CD14-positive monocyte (primary cell): ENCODE measurements at regions of chr9 and their contacts with region 1.

Region 1: GRCh38 chr9:89400403-89401116 is 82.3 kb downstream of the SECISBP2 start:
- DNase-seq: peak; percentile 77 to 89 (median 86)
- H3K4me3 ChIP-seq: peak overlapping the region in 1 of 3 experiments; percentile 42
- H3K4me3 Mint-ChIP-seq: peak overlapping the region; percentile 32 to 82
- H3K27ac ChIP-seq: peak overlapping the region; percentile 72 to 85
- H3K27ac Mint-ChIP-seq: peak overlapping the region; percentile 92 to 99 (median 96)
- H3K4me1 ChIP-seq: peaks cover 59% of the 10 kb centered on the region in 2 donors
- H3K4me1 Mint-ChIP-seq: peaks cover 75% of the 10 kb centered on the region
- H3K27me3 ChIP-seq: no peaks in the 10 kb centered on the region
- H3K27me3 Mint-ChIP-seq: peaks cover 0 to 6% (median 0%) of the 10 kb centered on the region in 3 donors
- CTCF ChIP-seq: no peak

Region 2: DNA sequence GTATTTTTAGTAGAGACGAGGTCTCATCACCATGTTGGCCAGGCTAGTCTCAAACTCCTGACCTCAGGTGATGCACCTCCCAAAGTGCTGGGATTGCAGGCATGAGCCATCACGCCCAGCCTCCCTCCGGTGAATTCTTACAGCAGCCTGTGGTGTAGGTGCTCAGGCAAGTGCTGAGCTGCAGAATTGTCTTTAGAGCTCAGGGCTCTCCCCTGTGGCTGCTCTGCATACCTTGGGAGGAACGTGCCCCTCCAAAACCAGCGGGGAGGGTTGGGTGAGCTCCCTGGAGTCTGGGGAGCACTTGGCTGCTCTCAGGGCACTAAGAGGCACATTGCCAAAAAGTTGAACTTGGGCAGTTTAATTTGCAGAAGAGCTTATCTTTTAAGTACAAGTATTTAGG is 52.9 kb before region 1 on chr9:
- intact Hi-C with region 1: loop called in 1 of 2 experiments (anchors 2 kb)
- DNase-seq: no peak
- H3K4me3 ChIP-seq: no peak overlapping the region
- H3K4me3 Mint-ChIP-seq: no peak overlapping the region
- H3K27ac ChIP-seq: no peak overlapping the region
- H3K27ac Mint-ChIP-seq: peak overlapping the region in 2 of 7 donors; percentile 25 to 51
- H3K4me1 ChIP-seq: peaks cover 19 to 21% of the 10 kb centered on the region in 2 donors
- H3K4me1 Mint-ChIP-seq: peaks cover 23% of the 10 kb centered on the region
- H3K27me3 ChIP-seq: no peaks in the 10 kb centered on the region
- H3K27me3 Mint-ChIP-seq: no peaks in the 10 kb centered on the region
- CTCF ChIP-seq: no peak

Region 3: DNA sequence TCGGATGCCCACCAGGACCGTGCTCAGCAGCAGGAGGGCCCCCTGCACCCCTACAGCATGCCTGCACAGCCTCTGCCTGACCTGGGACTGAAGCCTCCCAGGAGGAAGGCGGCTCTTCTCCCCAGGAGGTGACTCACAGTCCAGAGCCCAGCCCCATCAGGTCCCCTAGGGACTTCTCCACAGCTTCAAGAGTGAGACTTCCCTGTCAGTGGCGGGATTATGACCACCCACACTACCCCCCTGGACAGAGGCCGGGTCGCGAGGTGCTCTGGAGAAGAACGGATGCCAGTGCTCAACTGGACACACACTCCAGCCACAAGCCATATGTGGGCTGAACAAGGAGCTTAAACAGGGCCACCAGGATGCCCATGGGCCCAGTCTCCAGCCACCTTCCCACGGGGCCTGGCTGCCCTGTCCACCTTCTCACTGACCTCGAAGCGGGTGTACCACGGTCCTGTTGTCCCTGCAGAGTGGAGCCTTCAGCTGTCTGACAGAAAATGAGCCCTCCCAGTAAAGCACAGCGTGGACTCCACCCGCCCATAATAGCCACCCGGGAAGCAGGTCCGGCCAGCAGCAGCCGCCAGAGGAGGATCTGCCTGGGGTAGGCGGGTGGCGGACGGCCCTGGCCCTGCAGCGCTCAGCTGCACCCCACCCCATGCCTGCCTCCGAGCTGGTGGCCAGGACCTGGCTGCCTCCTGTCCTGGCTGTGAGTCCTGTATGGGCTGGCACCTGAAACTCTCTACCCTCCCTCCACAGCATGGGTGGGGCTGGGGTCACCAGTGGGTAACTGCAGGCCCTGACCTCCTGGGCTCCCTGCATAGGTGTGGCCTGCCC is 42.6 kb after region 1 on chr9:
- intact Hi-C with region 1: loop called in 1 of 2 experiments (anchors 5 kb)
- DNase-seq: peak; percentile 82 to 90 (median 85)
- H3K4me3 ChIP-seq: no peak overlapping the region
- H3K4me3 Mint-ChIP-seq: peak overlapping the region; percentile 39 to 41
- H3K27ac ChIP-seq: peak overlapping the region; percentile 89 to 95
- H3K27ac Mint-ChIP-seq: peak overlapping the region; percentile 85 to 97 (median 96)
- H3K4me1 ChIP-seq: peaks cover 50 to 54% of the 10 kb centered on the region in 2 donors
- H3K4me1 Mint-ChIP-seq: peaks cover 71% of the 10 kb centered on the region
- H3K27me3 ChIP-seq: no peaks in the 10 kb centered on the region
- H3K27me3 Mint-ChIP-seq: peaks cover 0 to 2% (median 0%) of the 10 kb centered on the region in 3 donors
- CTCF ChIP-seq: no peak

Region 4: DNA sequence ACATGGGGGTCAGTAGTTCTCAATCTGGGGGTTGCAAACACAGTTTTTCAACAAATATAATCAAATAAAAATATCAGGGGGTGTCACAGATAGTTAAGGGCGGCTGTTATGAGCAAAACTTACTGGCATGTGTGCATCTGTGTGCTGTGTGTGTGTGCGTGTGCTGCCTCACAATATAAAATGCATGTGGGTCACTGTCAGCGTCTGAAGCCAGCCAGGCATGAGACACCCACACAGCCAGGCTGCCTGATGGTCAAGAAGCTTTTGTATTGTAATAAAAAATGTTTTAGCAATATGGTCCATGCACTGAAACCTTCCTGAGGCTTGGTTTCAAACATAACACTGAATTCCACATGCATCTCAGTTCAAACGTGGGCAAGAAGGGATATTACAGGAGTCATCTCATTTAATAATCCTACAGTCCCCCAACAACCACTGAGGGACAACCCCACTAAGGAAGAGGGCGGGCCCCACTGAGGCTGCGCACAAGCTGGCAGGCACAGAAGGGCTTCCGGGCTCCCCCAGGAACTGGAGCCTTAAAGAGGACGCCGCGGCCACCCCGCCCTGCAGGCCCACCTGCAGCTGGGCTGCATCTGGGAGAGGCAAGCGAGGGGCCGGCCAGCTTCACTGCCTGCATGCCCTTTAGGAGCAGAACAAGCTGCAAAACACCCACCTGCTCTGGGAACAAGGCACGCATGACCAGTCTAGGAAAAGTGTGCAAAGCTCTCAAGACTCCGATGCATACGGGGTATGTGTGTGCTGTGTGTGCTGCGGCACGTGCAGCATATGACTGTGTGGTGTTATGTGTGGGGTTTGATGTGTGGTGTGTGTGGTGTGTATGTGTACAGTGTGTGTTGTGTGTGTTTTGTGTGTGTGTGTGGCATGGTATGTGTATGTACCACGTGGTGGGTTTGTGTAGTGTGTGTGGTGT is 83.3 kb after region 1 on chr9:
- intact Hi-C with region 1: no loop called
- DNase-seq: no peak
- H3K4me3 ChIP-seq: peak overlapping the region in 1 of 3 experiments; percentile 11
- H3K4me3 Mint-ChIP-seq: peak overlapping the region; percentile 48 to 68
- H3K27ac ChIP-seq: peak overlapping the region in 1 of 2 donors; percentile 46
- H3K27ac Mint-ChIP-seq: peak overlapping the region in 5 of 7 donors; percentile 2 to 85 (median 64)
- H3K4me1 ChIP-seq: peaks cover 21 to 25% of the 10 kb centered on the region in 2 donors
- H3K4me1 Mint-ChIP-seq: peaks cover 77% of the 10 kb centered on the region
- H3K27me3 ChIP-seq: no peaks in the 10 kb centered on the region
- H3K27me3 Mint-ChIP-seq: peaks cover 0 to 2% (median 2%) of the 10 kb centered on the region in 3 donors
- CTCF ChIP-seq: no peak